Right lobe of liver (tissue), 6 donors: ENCODE measurements at regions of chr4 and their contacts with region 1.

Region 1: GRCh38 chr4:41214136-41214824 is at the start of gene APBB2:
- DNase-seq: peak; percentile 95 to 96 (median 96)
- ATAC-seq: peak; percentile 80 to 89 (median 84)
- H3K4me3 ChIP-seq: peak within 1 kb of the TSS; percentile 71 to 89 (median 84)
- H3K27ac ChIP-seq: peak within 1 kb of the TSS; percentile 53 to 78 (median 77)
- H3K4me1 ChIP-seq: peaks cover 0 to 29% (median 6%) of the 10 kb centered on the region in 4 donors
- H3K27me3 ChIP-seq: no peaks in the 10 kb centered on the region
- CTCF ChIP-seq: peak; percentile 60 to 94 (median 90)
- POLR2A ChIP-seq: peak; percentile 91
- total RNA-seq, gene APBB2: 14.1 to 27.9 (median 25.1) TPM

Region 2: GRCh38 chr4:40685300-40685699 is 529.0 kb before region 1 on chr4:
- intact Hi-C with region 1: no loop called
- DNase-seq: no peak
- ATAC-seq: peak in 1 of 4 donors; percentile 18
- H3K4me3 ChIP-seq: no peak overlapping the region
- H3K27ac ChIP-seq: no peak overlapping the region
- H3K4me1 ChIP-seq: peaks cover 0 to 29% (median 2%) of the 10 kb centered on the region in 4 donors
- H3K27me3 ChIP-seq: no peaks in the 10 kb centered on the region
- CTCF ChIP-seq: no peak
- POLR2A ChIP-seq: no peak

Region 3: GRCh38 chr4:40924096-40924792 is 290.0 kb before region 1 on chr4:
- intact Hi-C with region 1: loop called in 1 of 2 experiments (anchors 5 kb)
- DNase-seq: peak; percentile 63 to 75 (median 70)
- ATAC-seq: peak; percentile 75 to 82 (median 78)
- H3K4me3 ChIP-seq: no peak overlapping the region
- H3K27ac ChIP-seq: no peak overlapping the region
- H3K4me1 ChIP-seq: peaks cover 0 to 4% (median 0%) of the 10 kb centered on the region in 4 donors
- H3K27me3 ChIP-seq: no peaks in the 10 kb centered on the region
- CTCF ChIP-seq: peak; percentile 78 to 83 (median 80)
- POLR2A ChIP-seq: no peak

Region 4: DNA sequence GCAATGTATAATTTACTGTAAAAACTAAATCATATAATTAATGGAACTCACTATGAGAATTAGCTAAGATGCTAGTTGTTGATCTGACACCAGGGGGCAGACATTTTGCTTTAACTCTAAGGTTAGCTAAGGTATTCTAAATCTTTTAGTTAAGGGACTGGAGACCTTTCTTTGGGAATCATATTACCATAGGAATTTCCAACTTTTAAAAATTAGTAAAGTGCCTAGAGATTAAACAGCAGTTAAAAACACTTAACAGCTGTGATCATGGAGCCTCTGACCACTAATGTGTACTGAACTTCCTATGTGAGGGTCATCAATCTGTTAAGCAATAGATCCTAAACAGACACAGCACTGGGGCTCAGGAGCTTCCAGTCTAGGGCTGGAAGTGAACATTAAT is 237.9 kb before region 1 on chr4:
- intact Hi-C with region 1: loop called in 1 of 2 experiments (anchors 5 kb)
- DNase-seq: no peak
- ATAC-seq: peak; percentile 75 to 83 (median 78)
- H3K4me3 ChIP-seq: no peak overlapping the region
- H3K27ac ChIP-seq: no peak overlapping the region
- H3K4me1 ChIP-seq: no peaks in the 10 kb centered on the region
- H3K27me3 ChIP-seq: no peaks in the 10 kb centered on the region
- CTCF ChIP-seq: peak; percentile 76 to 82 (median 77)
- POLR2A ChIP-seq: no peak

Region 5: GRCh38 chr4:41146716-41147506 is 67.4 kb before region 1 on chr4:
- intact Hi-C with region 1: loop called in 1 of 2 experiments (anchors 5 kb)
- DNase-seq: peak; percentile 49 to 72 (median 60)
- ATAC-seq: peak; percentile 60 to 71 (median 66)
- H3K4me3 ChIP-seq: peak overlapping the region in 2 of 3 donors; percentile 10 to 21
- H3K27ac ChIP-seq: peak overlapping the region; percentile 35 to 79 (median 66)
- H3K4me1 ChIP-seq: peaks cover 3 to 49% (median 4%) of the 10 kb centered on the region in 4 donors
- H3K27me3 ChIP-seq: no peaks in the 10 kb centered on the region
- CTCF ChIP-seq: no peak
- POLR2A ChIP-seq: no peak